ENCODE measurements at regions of chr17 and their contacts with region 1.

Region 1: GRCh38 chr17:65047942-65048341 is 8.6 kb downstream of the GNA13 start:
- DNase-seq: no peak
- ATAC-seq: no peak
- H3K4me3 ChIP-seq: no peak overlapping the region
- H3K27ac ChIP-seq: no peak overlapping the region
- H3K4me1 ChIP-seq: 0 out of 5 replicates have a peak, but pooled peaks cover 0 to 3% of the 10 kb centered on the region in 2 experiments
- H3K27me3 ChIP-seq: no peaks in the 10 kb centered on the region
- CTCF ChIP-seq: no peak
- EP300 ChIP-seq: no peak
- POLR2A ChIP-seq: no peak
- RAD21 ChIP-seq: no peak

Region 2: GRCh38 chr17:65013613-65014391 is 34.1 kb before region 1 on chr17:
- CTCF ChIA-PET with region 1: no interaction called
- POLR2A ChIA-PET with region 1: no interaction called
- in situ Hi-C with region 1: no loop called
- intact Hi-C with region 1: no loop called
- DNase-seq: no peak
- ATAC-seq: no peak
- H3K4me3 ChIP-seq: no peak overlapping the region
- H3K27ac ChIP-seq: no peak overlapping the region
- H3K4me1 ChIP-seq: peaks cover 0 to 12% of the 10 kb centered on the region in 2 experiments; a peak in 2 of 5 replicates
- H3K27me3 ChIP-seq: no peaks in the 10 kb centered on the region
- CTCF ChIP-seq: no peak
- EP300 ChIP-seq: no peak
- POLR2A ChIP-seq: no peak
- RAD21 ChIP-seq: no peak

Region 3: GRCh38 chr17:65035175-65035574 is 12.8 kb before region 1 on chr17:
- CTCF ChIA-PET with region 1: no interaction called
- POLR2A ChIA-PET with region 1: interaction called, 11 read pairs
- in situ Hi-C with region 1: no loop called
- intact Hi-C with region 1: no loop called
- DNase-seq: no peak
- ATAC-seq: no peak
- H3K4me3 ChIP-seq: no peak overlapping the region
- H3K27ac ChIP-seq: no peak overlapping the region
- H3K4me1 ChIP-seq: peaks cover 3 to 11% of the 10 kb centered on the region in 2 experiments; a peak in 4 of 5 replicates
- H3K27me3 ChIP-seq: no peaks in the 10 kb centered on the region
- CTCF ChIP-seq: no peak
- EP300 ChIP-seq: no peak
- POLR2A ChIP-seq: no peak
- RAD21 ChIP-seq: no peak